Heart left ventricle (tissue), 16 donors: ENCODE measurements at regions of chr1 and their contacts with region 1.

Region 1: DNA sequence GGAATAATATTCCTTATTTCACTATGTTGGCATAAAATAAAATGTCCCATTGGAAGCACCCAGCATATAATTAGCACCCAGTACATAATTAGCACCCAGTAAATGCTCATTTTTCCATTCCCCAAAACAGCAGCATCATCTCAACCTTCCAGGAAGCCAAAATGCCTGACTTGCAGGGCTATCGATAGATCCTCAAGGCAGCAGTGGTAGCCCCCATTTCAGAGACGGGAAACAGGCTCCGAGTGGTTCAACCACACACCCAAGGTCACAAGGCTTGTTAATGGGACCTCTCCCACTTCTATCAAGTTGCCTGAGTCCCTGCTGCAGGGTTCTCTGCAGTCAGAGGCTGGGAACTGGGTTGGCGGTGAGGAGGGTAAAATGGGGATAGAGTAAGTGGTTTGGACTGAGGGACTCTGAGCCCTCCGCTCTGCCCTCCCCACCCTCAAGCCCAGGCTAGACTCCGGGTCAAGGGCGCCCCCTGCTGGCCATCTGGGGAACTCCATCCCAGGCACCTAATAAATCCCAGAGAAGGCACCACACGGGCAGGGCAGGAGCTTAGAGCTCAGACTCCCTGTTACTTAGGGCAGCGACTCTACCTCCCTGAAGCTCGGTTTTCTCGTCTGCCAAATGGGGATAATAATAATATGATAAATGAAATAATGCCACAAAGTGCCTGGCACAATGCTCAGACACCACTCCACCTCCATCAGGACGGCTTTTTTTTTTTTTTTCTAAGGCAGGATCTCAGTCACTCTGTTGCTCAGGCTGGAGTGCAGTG is 21.9 kb upstream of the LAPTM5 start:
- DNase-seq: peak; percentile 72 to 91 (median 78)
- ATAC-seq: peak; percentile 27 to 74 (median 73)
- H3K4me3 ChIP-seq: no peak overlapping the region
- H3K27ac ChIP-seq: peak overlapping the region in 1 of 12 donors; percentile 75
- H3K4me1 ChIP-seq: peaks cover 0 to 42% (median 4%) of the 10 kb centered on the region in 12 donors
- H3K27me3 ChIP-seq: peaks cover 0 to 10% (median 0%) of the 10 kb centered on the region in 9 donors
- CTCF ChIP-seq: peak; percentile 88 to 99 (median 94)
- POLR2A ChIP-seq: no peak

Region 2: DNA sequence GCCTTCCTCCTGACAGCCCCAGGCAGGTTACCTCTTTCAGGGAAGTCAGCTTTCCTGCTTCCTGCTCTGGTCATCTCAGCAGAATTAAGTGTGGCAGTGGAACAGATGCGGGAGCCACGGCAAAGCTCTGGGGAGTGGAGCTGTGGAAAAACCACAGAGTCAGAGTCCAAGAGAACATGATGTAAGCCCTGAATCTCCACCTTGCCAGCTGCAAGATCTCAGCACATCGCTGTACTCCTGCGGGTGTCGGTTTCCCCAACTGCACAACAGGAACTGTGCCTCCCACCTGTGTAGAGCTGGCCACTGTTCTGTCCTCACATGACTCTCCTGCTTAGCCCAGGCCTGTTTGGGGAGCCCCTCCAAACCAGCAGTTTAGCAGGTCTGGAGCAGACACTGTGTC is 179.8 kb before region 1 on chr1:
- intact Hi-C with region 1: no loop called
- DNase-seq: no peak
- ATAC-seq: peak in 1 of 4 donors; percentile 19
- H3K4me3 ChIP-seq: no peak overlapping the region
- H3K27ac ChIP-seq: no peak overlapping the region
- H3K4me1 ChIP-seq: no peaks in the 10 kb centered on the region
- H3K27me3 ChIP-seq: peaks cover 0 to 39% (median 2%) of the 10 kb centered on the region in 9 donors
- CTCF ChIP-seq: no peak
- POLR2A ChIP-seq: no peak

Region 3: GRCh38 chr1:30718636-30719405 is 60.7 kb before region 1 on chr1:
- intact Hi-C with region 1: loop called (anchors 1 to 2 kb)
- DNase-seq: peak in 4 of 5 donors; percentile 80 to 98 (median 86)
- ATAC-seq: peak; percentile 73 to 88 (median 86)
- H3K4me3 ChIP-seq: peak overlapping the region; percentile 24 to 71 (median 56)
- H3K27ac ChIP-seq: peak overlapping the region; percentile 80 to 100 (median 95)
- H3K4me1 ChIP-seq: peaks cover 0 to 15% (median 8%) of the 10 kb centered on the region in 12 donors
- H3K27me3 ChIP-seq: no peaks in the 10 kb centered on the region
- CTCF ChIP-seq: peak; percentile 95 to 99 (median 98)
- POLR2A ChIP-seq: peak in 1 of 2 donors; percentile 73

Region 4: DNA sequence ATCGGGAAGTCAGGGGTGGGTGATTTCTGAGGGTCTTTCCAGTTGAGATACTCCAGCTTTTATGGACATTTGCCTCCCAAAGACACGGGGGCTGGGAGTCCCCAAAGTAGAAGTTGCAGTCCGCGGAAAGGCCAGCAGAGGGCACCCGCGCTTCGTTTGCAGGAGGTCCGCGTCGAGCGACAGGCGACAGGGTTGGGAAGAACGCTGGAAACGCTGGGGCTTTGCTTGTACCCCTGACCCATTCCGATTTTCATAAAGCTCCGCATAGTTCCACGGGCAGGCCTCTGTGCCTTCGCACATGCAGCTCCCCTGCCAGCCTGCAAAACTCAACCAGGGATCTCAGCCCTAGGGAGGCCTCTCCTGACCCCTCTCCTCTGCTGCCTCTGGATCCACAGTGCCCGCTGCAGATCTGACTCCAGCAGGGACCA is 22.3 kb after region 1 on chr1:
- intact Hi-C with region 1: loop called in 1 of 10 experiments (anchors 2 kb)
- DNase-seq: peak; percentile 75 to 92 (median 81)
- ATAC-seq: peak; percentile 58 to 77 (median 66)
- H3K4me3 ChIP-seq: peak overlapping the region in 1 of 12 donors; percentile 33
- H3K27ac ChIP-seq: peak overlapping the region in 1 of 12 donors; percentile 46
- H3K4me1 ChIP-seq: peaks cover 3 to 43% (median 16%) of the 10 kb centered on the region in 12 donors
- H3K27me3 ChIP-seq: peaks cover 0 to 15% (median 0%) of the 10 kb centered on the region in 9 donors
- CTCF ChIP-seq: peak; percentile 93 to 99 (median 96)
- POLR2A ChIP-seq: no peak

Region 5: DNA sequence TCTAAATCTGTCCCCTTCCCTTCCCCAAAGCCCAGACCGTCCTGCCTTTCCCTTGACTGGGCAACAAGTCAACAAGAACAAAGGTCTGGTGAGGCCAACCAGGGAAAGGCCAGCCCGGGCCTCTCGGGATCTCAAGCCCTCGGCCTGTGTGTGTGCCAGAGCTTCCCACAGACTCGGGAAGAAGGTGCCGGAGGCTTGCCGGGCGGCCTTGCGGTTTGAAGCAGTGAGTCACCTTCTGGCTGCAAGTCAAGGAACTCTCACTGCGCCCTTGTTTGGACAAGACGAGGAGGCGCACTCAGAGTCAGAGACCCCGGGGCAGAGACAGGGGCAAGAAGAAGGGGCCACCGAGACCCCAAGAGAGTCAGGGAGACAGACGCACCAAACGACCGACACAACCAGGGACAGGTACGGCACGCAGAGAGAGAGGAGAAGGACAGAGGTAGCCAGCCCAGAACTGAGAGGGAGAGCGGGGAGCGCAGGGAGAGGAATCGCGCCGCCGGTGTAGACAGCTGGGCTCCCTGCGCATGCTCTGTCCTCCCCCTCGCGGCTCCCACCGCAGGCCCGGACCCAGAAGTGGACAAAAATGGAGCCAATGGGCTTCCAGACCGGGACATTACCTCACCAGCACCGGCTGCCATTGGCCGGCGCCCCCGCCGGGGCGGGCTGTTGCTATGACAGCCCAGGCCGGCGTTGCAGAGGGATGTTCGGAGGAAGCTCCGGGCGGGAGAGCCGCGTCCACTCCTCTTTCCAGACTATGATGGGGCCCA is 44.7 kb after region 1 on chr1:
- intact Hi-C with region 1: no loop called
- DNase-seq: peak; percentile 95 to 97 (median 96)
- ATAC-seq: peak; percentile 97 to 99 (median 98)
- H3K4me3 ChIP-seq: peak overlapping the region in 11 of 12 donors; percentile 17 to 58 (median 53)
- H3K27ac ChIP-seq: peak overlapping the region; percentile 90 to 98 (median 92)
- H3K4me1 ChIP-seq: peaks cover 3 to 25% (median 18%) of the 10 kb centered on the region in 12 donors
- H3K27me3 ChIP-seq: peaks cover 0 to 7% (median 0%) of the 10 kb centered on the region in 9 donors
- CTCF ChIP-seq: peak in 2 of 12 donors; percentile 7 to 20
- POLR2A ChIP-seq: peak; percentile 35 to 78

Region 6: DNA sequence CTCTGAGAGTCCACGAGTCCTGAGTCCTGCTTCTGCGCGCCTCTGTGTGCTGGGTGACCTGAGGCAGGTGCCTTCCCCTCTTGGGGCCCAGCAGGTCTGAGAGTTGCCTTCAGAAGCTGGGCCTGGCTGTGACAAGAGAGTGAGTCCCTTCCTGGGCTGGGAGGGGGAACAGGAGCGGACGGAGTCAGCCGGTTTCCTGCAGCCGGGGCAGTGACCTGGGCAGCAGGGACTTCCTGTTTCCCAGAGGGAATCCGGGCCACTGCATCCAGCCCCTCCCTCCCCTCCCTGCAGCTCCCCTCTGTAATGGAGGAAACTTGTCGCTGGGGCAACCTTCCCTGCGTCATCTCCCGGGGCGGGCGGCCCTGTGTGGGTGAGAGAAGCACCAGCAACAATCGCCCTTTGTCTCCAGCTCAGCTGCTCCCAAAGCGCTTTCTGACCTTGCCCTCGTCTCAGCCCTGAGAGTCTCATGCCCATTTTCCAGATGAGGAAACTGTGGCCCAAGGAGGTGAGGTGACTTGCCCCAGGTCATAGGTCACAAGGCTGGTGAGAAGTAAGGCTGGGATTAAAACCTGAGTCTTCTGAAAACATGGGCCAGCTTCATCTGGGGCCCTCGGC is 68.0 kb after region 1 on chr1:
- intact Hi-C with region 1: no loop called
- DNase-seq: peak; percentile 89 to 94 (median 91)
- ATAC-seq: peak; percentile 73 to 94 (median 92)
- H3K4me3 ChIP-seq: no peak overlapping the region
- H3K27ac ChIP-seq: peak overlapping the region; percentile 60 to 90 (median 82)
- H3K4me1 ChIP-seq: peaks cover 0 to 34% (median 20%) of the 10 kb centered on the region in 12 donors
- H3K27me3 ChIP-seq: peaks cover 0 to 33% (median 0%) of the 10 kb centered on the region in 9 donors
- CTCF ChIP-seq: no peak
- POLR2A ChIP-seq: no peak